Activated T-helper 2 cell treated with anti-CD3 and anti-CD28 coated beads, Interferon-gamma antibody, Interleukin-2, Interleukin-4, amounts not matched to agents 10 μg/mL and 5 μg/mL and 100 μg/mL, durations not matched to agents 14 hours and 24 hours and 36 hours (primary cell): ENCODE measurements at regions of chr5 and their contacts with region 1.

Region 1: DNA sequence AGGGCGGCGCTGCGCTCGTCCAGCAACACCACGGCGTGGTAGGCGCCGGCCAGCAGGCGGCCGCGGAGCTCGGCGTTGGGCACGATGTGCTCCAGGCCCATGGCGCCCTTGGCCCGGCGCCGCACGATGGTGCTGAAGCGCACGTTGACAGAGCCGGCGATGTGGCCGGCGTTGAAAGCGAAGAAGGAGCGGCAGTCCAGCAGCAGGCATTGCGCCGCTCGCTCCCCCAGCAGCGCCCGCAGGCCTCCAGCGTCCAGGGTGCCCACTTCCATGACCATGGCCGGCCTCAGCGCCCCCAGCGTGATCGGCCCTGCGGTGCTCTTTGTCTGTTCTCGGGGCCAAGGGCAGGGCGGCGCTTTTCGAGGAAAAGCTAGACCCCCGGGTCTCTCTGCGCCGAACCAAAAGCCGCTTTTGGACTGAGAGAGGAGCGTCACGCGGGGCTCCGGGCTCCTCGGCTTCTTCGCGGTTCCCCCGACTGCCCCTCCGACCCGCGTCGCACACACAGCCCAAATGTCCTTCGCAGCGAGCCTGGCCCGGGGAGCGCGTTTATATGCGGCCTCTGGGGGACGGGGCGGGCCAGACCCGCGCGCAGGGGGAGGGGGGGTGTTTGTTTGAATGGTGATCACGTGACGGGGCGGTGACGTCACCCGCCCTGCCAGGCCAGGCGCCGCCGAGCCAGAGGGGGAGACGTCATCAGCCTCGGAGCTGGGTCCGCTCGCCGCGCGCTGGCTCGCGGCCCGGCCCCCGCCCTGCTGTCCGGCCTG is at the start of gene DUSP1:
- DNase-seq: peak; percentile 93
- H3K4me3 Mint-ChIP-seq: peak within 1 kb of the TSS; percentile 86
- H3K27ac Mint-ChIP-seq: peak within 1 kb of the TSS; percentile 97
- H3K4me1 Mint-ChIP-seq: peaks cover 39% of the 10 kb centered on the region
- H3K27me3 Mint-ChIP-seq: no peaks in the 10 kb centered on the region
- total RNA-seq, gene DUSP1: 8.9 and 9.7 TPM in 2 replicates

Region 2: DNA sequence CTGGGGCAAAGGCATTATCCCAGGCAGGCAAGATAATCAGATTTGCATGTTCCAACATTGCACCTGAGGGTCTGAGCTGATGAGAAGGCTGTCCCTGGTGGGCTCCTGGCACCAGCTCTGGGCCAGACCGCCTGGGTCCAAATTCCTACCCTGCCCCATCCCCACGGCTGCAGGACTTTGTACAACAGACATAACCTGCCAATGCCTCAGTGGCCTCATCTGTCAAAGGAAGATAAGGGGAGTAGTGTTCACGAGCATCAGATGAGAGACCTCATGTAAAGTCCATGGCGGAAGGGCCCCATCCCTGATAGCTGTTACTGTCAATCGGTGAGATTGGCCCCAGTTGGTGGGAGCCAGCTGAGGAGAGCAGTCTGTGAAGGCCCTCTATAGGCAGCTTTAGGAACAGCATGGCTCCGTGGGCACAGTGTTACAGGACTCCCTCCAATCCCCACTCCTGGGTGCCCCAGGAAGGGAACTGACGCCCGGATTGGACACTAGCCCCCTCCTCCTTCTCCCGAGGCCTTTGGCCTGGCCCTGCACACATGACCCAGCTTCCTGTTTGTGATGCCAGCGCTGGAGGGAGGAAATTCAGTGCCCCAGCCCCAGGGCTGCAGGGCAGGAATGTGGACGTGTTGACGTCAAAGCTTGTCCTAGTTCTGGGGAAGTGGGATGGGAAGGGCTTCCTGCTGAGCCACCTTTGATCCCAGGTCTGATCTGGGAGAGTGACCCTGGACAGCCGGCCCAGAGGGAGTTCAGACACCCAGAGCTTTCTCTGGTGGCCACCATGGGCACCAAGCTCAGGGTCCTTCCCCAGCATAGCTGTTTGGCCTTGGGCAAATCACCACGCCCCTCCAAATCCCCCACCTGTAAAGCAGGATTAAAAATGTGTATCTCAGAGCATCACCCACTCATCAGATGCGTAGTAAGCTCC is 56.1 kb before region 1 on chr5:
- intact Hi-C with region 1: loop called (anchors 2 kb)
- DNase-seq: peak; percentile 48
- H3K4me3 Mint-ChIP-seq: no peak overlapping the region
- H3K27ac Mint-ChIP-seq: no peak overlapping the region
- H3K4me1 Mint-ChIP-seq: peaks cover 2% of the 10 kb centered on the region
- H3K27me3 Mint-ChIP-seq: no peaks in the 10 kb centered on the region

Region 3: GRCh38 chr5:172806897-172807672 is 36.2 kb after region 1 on chr5:
- intact Hi-C with region 1: loop called (anchors 1 kb)
- DNase-seq: peak; percentile 78
- H3K4me3 Mint-ChIP-seq: peak overlapping the region; percentile 58
- H3K27ac Mint-ChIP-seq: peak overlapping the region; percentile 91
- H3K4me1 Mint-ChIP-seq: peaks cover 14% of the 10 kb centered on the region
- H3K27me3 Mint-ChIP-seq: no peaks in the 10 kb centered on the region

Region 4: GRCh38 chr5:172833686-172834414 is 63.0 kb after region 1 on chr5 and contains the start of gene ERGIC1:
- intact Hi-C with region 1: loop called (anchors 2 kb)
- DNase-seq: peak; percentile 70
- H3K4me3 Mint-ChIP-seq: peak within 1 kb of the TSS; percentile 84
- H3K27ac Mint-ChIP-seq: peak within 1 kb of the TSS; percentile 78
- H3K4me1 Mint-ChIP-seq: peaks cover 34% of the 10 kb centered on the region
- H3K27me3 Mint-ChIP-seq: no peaks in the 10 kb centered on the region
- total RNA-seq, gene ERGIC1: 53.1 and 54.8 TPM in 2 replicates

Region 5: DNA sequence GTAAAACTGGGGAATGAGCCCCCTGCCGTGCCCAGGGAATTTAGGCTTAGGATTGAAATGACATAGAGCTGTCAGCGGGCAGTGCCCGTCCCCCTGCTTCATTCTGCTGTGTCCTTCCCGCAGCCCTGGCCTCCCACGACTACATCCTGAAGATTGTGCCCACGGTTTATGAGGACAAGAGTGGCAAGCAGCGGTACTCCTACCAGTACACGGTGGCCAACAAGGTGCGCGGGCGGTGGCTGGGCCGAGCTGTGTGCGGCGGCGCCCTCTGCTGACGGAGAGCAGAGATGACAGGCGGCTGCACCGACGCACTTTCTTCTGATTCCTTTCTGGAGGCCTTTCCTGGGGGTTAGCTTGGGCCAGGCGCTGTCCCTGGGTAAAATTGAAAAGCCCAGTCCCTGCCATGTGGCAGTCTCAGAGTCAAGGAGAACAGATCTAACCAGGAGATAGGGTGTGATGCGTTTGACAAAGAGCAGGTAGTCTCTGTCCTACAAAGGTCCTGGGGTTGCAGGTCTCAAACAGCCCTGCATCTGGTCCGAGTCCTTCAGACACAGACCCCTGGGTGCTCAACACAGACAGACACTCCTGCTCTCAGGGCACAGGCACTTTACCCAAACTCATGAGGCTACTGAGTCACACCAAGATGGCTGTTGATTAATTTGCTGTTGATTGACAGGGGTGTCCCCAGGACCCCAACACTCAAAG is 161.6 kb after region 1 on chr5:
- intact Hi-C with region 1: loop called (anchors 5 kb)
- DNase-seq: peak; percentile 59
- H3K4me3 Mint-ChIP-seq: no peak overlapping the region
- H3K27ac Mint-ChIP-seq: no peak overlapping the region
- H3K4me1 Mint-ChIP-seq: no peaks in the 10 kb centered on the region
- H3K27me3 Mint-ChIP-seq: no peaks in the 10 kb centered on the region

Region 6: GRCh38 chr5:172958331-172959046 is 187.6 kb after region 1 on chr5:
- intact Hi-C with region 1: loop called (anchors 1 kb)
- DNase-seq: peak; percentile 54
- H3K4me3 Mint-ChIP-seq: peak overlapping the region; percentile 92
- H3K27ac Mint-ChIP-seq: peak overlapping the region; percentile 95
- H3K4me1 Mint-ChIP-seq: peaks cover 13% of the 10 kb centered on the region
- H3K27me3 Mint-ChIP-seq: peaks cover 2% of the 10 kb centered on the region